ENCODE measurements at regions of chr2 and their contacts with region 1.

Region 1: GRCh38 chr2:95022309-95023221 is 2.9 kb upstream of the MAL start:
- DNase-seq: peak; percentile 85
- CTCF ChIP-seq: peak; percentile 98

Region 2: DNA sequence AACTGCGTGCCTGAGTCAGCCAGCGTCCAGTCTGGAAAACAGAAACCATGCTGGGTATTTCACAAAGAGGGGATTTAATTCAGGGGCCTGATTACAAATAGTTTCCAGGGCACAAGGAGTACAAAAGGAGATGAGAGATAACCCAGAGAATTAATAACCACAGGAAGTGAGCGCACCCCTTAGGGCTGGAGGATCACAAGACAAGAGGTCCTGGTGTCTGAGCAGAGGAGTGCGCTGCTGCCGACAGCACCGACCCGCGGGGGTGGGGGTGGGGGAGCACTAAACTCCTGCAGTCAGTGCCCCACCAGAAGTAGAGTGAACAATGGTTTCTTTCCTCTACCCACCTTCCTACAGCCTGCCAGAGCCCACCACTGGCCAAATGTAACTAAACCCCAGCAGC is 17.9 kb before region 1 on chr2:
- CTCF ChIA-PET with region 1: interaction called, 11 read pairs
- POLR2A ChIA-PET with region 1: no interaction called
- DNase-seq: no peak
- CTCF ChIP-seq: no peak

Region 3: DNA sequence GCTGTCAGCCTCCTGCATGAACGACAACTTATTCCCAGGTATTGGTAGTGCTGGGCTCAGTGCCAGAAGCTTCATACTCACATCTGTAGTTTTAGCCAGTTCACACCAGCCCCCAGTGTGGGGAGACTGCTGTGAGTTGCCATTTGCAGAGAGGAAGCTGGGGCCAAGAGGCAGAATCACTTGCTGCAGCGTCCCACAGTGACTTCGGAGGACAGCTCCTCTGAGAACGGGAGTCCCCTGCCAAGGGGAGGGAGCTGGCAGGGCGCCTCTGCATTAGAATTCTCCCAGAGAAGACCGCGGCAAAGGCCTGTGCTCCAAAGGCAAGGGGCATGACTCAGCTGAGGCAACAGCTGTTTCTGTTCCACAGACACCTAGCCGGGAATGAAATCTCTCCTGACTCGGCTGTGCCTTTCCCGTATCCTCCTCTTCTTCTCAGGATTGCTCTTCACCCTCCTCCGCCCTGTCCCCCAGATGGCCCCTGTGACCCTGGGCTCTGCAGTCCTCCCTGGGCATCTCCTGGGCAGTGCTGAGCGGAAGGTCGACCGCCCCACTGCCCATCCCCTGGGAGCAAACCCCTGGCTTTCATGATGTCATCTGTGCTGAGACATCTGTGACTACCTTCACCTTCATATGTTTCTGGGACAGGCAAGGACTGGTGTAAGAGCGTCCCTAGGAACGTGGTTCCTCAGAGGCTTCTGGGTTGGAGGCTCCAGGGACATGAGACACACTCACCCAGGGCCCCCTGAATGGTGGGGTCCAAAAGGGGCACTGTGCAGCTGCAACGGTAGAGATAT is 20.9 kb after region 1 on chr2:
- CTCF ChIA-PET with region 1: interaction called, 64 read pairs
- POLR2A ChIA-PET with region 1: no interaction called
- DNase-seq: no peak
- CTCF ChIP-seq: no peak

Region 4: DNA sequence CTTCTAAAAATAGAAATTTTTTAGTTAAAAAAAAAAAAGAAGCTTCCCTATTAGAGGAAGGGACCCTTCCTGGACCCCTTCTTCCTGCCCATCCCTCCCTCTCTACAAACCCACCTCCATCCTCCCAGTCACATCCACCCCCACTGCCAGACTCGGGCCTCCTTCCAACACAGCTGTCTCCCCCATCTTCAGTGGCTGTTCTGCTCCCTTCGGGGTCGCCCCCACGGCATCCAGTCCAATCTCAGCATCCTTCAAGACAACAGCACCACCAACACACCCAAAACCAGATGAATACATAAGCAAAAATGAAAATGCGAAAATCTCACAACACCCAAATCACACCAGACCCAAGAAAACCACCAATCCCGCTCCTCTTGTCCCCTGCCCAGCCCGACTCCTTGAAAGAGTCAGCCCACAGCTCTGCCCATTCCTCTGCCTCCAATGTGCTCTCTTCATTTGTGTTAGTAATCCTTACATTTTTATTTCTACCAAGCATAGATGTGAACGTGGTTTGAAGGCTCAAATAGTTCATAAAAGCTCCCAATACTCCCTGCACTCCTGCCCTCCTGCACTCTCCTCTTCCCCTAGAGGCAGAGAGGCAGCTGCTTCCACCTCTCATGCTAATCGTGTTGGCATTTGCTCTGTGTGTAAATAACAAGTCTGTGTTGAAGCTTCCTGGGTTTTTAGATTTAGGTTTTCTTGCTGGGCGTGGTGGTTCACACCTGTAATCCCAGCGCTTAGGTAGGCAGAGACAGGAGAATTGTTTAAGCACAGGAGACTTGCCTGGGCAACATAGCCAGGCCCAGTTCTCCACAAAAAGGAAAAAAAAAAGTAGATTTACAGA is 39.9 kb after region 1 on chr2:
- CTCF ChIA-PET with region 1: interaction called, 141 read pairs
- POLR2A ChIA-PET with region 1: no interaction called
- DNase-seq: no peak
- CTCF ChIP-seq: no peak

Region 5: DNA sequence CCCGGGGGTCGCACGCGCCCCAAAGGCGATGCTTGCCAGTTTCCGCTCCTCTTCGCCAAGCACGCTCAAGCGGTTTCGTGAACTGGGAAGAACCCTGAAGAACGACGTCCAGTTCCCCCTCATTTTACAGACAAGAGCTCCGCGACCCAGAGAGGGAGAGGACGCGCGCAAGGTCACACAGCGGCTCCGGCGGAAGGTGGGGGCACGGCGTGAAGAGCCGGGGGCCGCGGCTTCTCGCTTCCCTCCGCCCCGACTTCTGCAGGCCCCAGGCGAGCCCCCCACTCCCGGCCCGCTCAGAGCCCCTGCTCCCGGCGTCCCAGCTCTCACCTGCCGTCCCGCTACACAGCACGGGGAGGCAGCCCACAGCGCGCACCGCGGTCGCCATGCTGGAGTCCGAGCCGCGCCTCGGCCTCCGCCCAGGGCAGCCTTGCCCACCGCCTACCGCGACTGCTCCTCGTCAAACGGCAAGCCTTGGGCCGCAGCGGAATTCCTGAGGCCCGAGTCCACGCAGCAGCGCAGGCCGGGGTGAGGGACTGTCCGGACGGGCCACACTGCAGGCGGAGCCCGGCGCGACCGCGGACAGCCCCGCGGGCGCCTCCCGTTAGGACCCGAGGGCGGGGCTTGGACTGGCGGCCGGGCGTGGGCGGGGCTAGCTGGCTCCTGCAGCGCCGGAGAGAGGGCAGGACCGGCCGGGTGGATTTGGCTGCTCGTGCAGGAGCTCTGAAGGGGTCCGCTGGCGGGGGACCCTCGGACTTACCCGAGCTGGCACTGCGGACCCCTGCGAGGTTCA is 99.0 kb after region 1 on chr2 and contains the start of gene MRPS5:
- CTCF ChIA-PET with region 1: interaction called, 43 read pairs
- POLR2A ChIA-PET with region 1: no interaction called
- DNase-seq: peak; percentile 95
- CTCF ChIP-seq: no peak